ENCODE measurements at regions of chr5 and their contacts with region 1.

Region 1: GRCh38 chr5:147887024-147887627 is 8.6 kb downstream of the SCGB3A2 start:
- DNase-seq: peak in 1 of 3 donors; percentile 78
- ATAC-seq: peak; percentile 25
- H3K4me3 ChIP-seq: no peak overlapping the region
- H3K4me1 ChIP-seq: no peaks in the 10 kb centered on the region
- CTCF ChIP-seq: peak; percentile 25

Region 2: GRCh38 chr5:147935032-147935431 is 47.9 kb after region 1 on chr5:
- intact Hi-C with region 1: loop called in 1 of 2 experiments (anchors 5 kb)
- DNase-seq: peak in 1 of 3 donors; percentile 38
- ATAC-seq: peak; percentile 62
- H3K4me3 ChIP-seq: no peak overlapping the region
- H3K4me1 ChIP-seq: no peaks in the 10 kb centered on the region
- CTCF ChIP-seq: no peak

Measured in mucosa of descending colon (tissue), 3 donors.